AG04450 (cell line): ENCODE measurements at regions of chr10 and their contacts with region 1.

Region 1: DNA sequence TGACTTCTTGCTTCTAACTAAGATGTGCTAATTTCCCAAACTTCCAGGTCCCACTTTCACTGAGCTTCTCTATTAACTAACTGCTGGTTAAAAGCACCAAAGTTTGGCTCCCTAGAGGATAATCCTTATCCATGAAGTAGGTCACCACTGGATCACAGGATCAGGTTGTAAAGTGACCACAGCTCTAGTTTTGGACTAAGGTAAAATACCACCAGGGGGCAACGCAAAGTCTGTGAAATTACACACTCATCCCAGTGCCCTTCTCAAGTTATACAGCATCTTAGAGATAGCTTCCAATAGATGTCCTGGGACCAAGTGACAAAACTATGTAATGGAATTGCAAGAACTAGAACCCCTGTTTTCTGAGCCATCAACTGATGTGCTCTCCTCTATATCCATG is 116.4 kb upstream of the ASAH2 start:
- DNase-seq: no peak
- H3K4me3 ChIP-seq: no peak overlapping the region
- H3K27ac ChIP-seq: no peak overlapping the region
- H3K27me3 ChIP-seq: no peaks in the 10 kb centered on the region
- CTCF ChIP-seq: peak; percentile 56

Region 2: DNA sequence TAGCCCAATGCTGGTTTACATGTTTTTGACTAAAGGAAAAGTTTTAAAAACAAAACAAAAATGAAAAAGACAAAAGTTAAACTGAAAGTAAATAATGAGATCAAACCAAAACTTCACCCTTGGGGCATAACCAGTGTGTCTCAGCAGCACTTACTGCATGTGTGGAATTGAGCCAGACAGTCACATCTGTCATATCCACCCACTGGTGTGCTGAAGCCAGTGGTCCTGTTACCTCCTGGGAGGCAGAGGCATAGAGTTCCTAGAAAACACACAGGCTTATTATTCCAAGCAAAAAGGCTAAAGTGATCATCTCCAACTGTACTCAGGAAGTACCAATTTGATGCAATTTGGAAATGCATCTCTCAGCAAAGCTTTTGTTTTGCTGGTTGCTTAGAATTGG is 156.9 kb before region 1 on chr10:
- CTCF ChIA-PET with region 1: no interaction called
- POLR2A ChIA-PET with region 1: no interaction called
- DNase-seq: no peak
- H3K4me3 ChIP-seq: no peak overlapping the region
- H3K27ac ChIP-seq: no peak overlapping the region
- H3K27me3 ChIP-seq: peaks cover 7% of the 10 kb centered on the region
- CTCF ChIP-seq: no peak

Region 3: DNA sequence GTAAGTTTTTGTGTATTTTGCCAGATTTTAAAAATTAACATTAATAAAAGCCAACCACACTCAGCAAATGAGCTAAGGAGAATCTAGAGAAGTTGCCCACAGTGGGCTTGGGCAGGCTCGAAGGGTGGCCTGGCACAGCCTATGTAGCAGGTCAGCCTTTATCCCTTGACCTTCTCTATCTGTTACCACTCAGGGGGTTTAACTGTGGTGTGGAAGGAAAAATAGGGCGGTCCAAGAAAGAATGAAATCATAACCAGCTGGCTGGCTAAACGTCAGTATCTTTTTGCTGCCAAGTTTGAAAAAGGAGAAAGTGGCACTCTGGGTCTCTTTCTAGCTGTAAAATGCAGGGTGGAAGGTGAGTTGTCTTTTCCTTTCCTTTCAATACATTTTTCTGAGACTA is 13.9 kb after region 1 on chr10:
- CTCF ChIA-PET with region 1: interaction called, 16 read pairs
- POLR2A ChIA-PET with region 1: no interaction called
- DNase-seq: no peak
- H3K4me3 ChIP-seq: no peak overlapping the region
- H3K27ac ChIP-seq: no peak overlapping the region
- H3K27me3 ChIP-seq: no peaks in the 10 kb centered on the region
- CTCF ChIP-seq: no peak

Region 4: DNA sequence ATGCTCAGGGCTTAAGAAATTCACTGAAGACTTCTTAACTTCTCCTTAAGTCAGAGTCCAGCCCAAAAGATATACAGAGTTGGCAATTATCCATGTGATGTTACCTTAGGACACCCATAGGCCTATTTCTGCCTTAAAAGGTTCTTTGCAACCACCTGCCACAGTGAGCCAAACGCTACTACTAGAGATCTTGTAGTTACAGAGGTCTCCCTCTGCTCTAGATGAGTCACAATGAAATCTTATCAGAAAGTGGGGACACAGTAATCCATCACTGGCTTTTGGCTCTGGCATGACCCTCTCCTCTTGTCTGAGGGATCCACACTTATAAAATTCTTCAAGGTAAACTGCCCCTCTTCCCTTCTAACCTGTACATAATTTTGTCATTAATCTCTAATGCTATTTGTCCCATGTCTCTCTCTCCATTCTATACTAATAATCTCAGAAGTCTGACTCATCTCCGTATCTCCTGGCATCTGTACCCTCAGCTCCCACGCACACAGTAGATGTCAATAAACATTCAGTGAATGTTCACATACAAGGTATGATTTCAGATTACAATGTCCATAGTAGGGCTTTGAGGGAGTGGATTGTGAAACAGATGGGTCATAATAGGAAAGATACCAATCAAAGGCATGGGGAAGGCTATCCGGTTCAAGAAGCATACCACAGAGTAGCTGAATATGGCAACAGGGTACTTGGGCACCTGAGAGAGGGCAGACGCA is 143.9 kb after region 1 on chr10:
- CTCF ChIA-PET with region 1: no interaction called
- POLR2A ChIA-PET with region 1: no interaction called
- DNase-seq: no peak
- H3K4me3 ChIP-seq: no peak overlapping the region
- H3K27ac ChIP-seq: peak overlapping the region; percentile 25
- H3K27me3 ChIP-seq: no peaks in the 10 kb centered on the region
- CTCF ChIP-seq: no peak

Region 5: GRCh38 chr10:50593523-50594376 is 226.0 kb after region 1 on chr10:
- CTCF ChIA-PET with region 1: interaction called, 10 read pairs
- POLR2A ChIA-PET with region 1: no interaction called
- DNase-seq: peak; percentile 37
- H3K4me3 ChIP-seq: no peak overlapping the region
- H3K27ac ChIP-seq: no peak overlapping the region
- H3K27me3 ChIP-seq: no peaks in the 10 kb centered on the region
- CTCF ChIP-seq: no peak

Region 6: DNA sequence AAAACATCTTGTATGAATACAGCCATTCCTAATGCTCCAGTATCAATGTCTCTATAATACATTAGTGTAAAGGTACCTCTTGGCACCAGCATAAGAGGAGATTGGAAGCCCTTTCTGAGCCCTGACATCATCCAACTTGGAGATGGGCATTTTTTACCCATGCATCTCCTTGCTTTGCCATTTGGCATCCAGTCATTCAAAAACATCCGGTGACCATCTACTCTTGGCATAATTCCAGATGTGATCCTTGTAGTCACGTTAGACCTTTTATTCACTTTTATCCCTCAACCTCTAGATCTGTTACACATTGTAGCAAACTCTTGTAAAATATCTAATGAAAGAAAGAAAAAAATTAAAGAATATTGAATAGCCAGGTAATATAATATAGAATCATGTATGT is 273.9 kb after region 1 on chr10:
- CTCF ChIA-PET with region 1: no interaction called
- POLR2A ChIA-PET with region 1: no interaction called
- DNase-seq: no peak
- H3K4me3 ChIP-seq: no peak overlapping the region
- H3K27ac ChIP-seq: no peak overlapping the region
- H3K27me3 ChIP-seq: no peaks in the 10 kb centered on the region
- CTCF ChIP-seq: no peak